ENCODE measurements at regions of chr5 and their contacts with region 1.

Region 1: DNA sequence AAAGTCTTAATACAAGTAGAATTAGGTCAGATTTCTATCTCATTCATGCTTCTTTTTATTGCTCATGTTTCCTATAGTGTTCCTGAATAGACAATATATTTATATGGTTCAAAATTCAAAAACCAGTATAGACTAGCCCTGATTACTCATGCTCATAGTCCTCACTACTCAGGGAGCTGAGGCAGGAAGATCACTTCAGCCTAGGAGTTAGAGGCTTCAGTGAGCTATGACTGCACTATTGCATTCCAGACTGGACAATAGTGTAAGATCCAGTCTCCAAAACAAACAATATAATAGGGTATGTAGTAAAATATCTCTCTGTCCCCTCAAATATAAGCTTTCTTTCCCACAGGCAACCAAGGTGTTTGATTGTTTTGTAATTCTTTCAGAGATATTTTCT is 2.4 kb downstream of the ANKRD31 start:
- DNase-seq: no peak
- CTCF ChIP-seq: no peak

Region 2: GRCh38 chr5:74326571-74327338 is 907.5 kb before region 1 on chr5:
- in situ Hi-C with region 1: no loop called
- DNase-seq: peak; percentile 43
- CTCF ChIP-seq: no peak

Region 3: DNA sequence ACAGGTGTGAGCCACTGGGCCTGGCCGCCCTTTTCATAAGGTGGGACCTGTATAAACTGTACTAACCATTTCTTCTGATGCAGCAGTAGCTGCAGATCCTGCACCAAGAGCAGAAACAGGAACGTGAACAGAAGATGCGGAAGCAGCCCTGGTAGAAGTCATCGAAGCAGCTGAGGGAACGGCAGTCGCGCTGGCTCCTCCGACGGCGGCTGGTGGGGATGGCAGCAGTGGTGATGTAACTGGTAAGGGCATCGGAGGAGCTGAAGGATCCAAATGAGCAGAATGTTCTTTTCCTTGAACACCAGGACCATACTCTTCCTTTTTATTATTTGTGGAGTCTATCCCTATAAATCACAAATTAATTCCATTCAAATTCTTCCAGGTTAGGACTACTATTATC is 450.9 kb after region 1 on chr5:
- in situ Hi-C with region 1: loop called (anchors 5 kb)
- DNase-seq: no peak
- CTCF ChIP-seq: no peak